Vagina (tissue), 2 donors: ENCODE measurements at regions of chr4 and their contacts with region 1.

Region 1: DNA sequence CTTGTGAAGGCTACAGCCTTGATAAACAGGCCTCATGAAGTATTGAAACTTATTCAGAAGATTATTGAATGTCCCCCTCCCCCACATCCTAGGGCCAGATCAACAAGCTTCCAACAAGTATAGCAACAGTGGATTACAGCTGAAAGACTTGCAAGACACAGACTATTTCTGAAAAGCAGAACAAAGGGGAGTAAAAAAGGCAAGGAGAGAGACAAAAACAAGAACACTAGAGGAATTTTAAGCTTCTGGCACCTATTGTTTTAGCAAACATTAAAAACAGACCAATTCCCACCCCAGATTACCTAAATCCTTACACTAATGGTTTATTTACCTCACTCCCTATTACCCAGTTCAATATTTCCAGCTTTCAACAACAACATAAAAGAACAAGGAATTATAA is 446.3 kb upstream of the FSTL5 start:
- DNase-seq: no peak
- H3K4me3 ChIP-seq: no peak overlapping the region
- H3K27ac ChIP-seq: no peak overlapping the region
- H3K4me1 ChIP-seq: no peaks in the 10 kb centered on the region
- H3K27me3 ChIP-seq: no peaks in the 10 kb centered on the region
- CTCF ChIP-seq: no peak
- POLR2A ChIP-seq: no peak

Region 2: GRCh38 chr4:162356181-162356580 is 253.9 kb before region 1 on chr4:
- intact Hi-C with region 1: no loop called
- DNase-seq: no peak
- H3K4me3 ChIP-seq: no peak overlapping the region
- H3K27ac ChIP-seq: no peak overlapping the region
- H3K4me1 ChIP-seq: no peaks in the 10 kb centered on the region
- H3K27me3 ChIP-seq: no peaks in the 10 kb centered on the region
- CTCF ChIP-seq: no peak
- POLR2A ChIP-seq: no peak

Region 3: GRCh38 chr4:162565730-162566129 is 44.4 kb before region 1 on chr4:
- intact Hi-C with region 1: loop called (anchors 5 kb)
- DNase-seq: no peak
- H3K4me3 ChIP-seq: no peak overlapping the region
- H3K27ac ChIP-seq: no peak overlapping the region
- H3K4me1 ChIP-seq: no peaks in the 10 kb centered on the region
- H3K27me3 ChIP-seq: no peaks in the 10 kb centered on the region
- CTCF ChIP-seq: no peak
- POLR2A ChIP-seq: no peak